Left lung (tissue), 14 donors: ENCODE measurements at regions of chr17 and their contacts with region 1.

Region 1: GRCh38 chr17:16363749-16364536 is 10.7 kb upstream of the CENPV start:
- DNase-seq: peak in 2 of 4 donors; percentile 61 to 76
- ATAC-seq: peak; percentile 98
- H3K4me3 ChIP-seq: no peak overlapping the region
- H3K27ac ChIP-seq: no peak overlapping the region
- H3K4me1 ChIP-seq: peaks cover 0 to 4% of the 10 kb centered on the region in 2 donors
- H3K27me3 ChIP-seq: no peaks in the 10 kb centered on the region
- CTCF ChIP-seq: peak; percentile 92 to 95

Region 2: GRCh38 chr17:16313139-16314090 is 50.5 kb before region 1 on chr17:
- intact Hi-C with region 1: no loop called
- DNase-seq: no peak
- ATAC-seq: no peak
- H3K4me3 ChIP-seq: no peak overlapping the region
- H3K27ac ChIP-seq: no peak overlapping the region
- H3K4me1 ChIP-seq: no peaks in the 10 kb centered on the region
- H3K27me3 ChIP-seq: no peaks in the 10 kb centered on the region
- CTCF ChIP-seq: no peak

Region 3: GRCh38 chr17:16438557-16439302 is 74.8 kb after region 1 on chr17:
- intact Hi-C with region 1: loop called in 1 of 2 experiments (anchors 10 kb)
- DNase-seq: peak; percentile 95 to 99 (median 96)
- ATAC-seq: peak; percentile 92
- H3K4me3 ChIP-seq: peak overlapping the region; percentile 91 to 98
- H3K27ac ChIP-seq: peak overlapping the region; percentile 86 to 92
- H3K4me1 ChIP-seq: peaks cover 24 to 56% of the 10 kb centered on the region in 2 donors
- H3K27me3 ChIP-seq: no peaks in the 10 kb centered on the region
- CTCF ChIP-seq: no peak